Endothelial cell of umbilical vein (primary cell): ENCODE measurements at regions of chr6 and their contacts with region 1.

Region 1: GRCh38 chr6:111605100-111605751 is 452 bp downstream of the TRAF3IP2 start:
- DNase-seq: peak; percentile 77
- H3K4me3 ChIP-seq: peak overlapping the region; percentile 37 to 44 (median 38)
- H3K27ac ChIP-seq: peak overlapping the region; percentile 92
- H3K4me1 ChIP-seq: peaks cover 59% of the 10 kb centered on the region
- H3K27me3 ChIP-seq: no peaks in the 10 kb centered on the region
- CTCF ChIP-seq: no peak
- POLR2A ChIP-seq: no peak

Region 2: DNA sequence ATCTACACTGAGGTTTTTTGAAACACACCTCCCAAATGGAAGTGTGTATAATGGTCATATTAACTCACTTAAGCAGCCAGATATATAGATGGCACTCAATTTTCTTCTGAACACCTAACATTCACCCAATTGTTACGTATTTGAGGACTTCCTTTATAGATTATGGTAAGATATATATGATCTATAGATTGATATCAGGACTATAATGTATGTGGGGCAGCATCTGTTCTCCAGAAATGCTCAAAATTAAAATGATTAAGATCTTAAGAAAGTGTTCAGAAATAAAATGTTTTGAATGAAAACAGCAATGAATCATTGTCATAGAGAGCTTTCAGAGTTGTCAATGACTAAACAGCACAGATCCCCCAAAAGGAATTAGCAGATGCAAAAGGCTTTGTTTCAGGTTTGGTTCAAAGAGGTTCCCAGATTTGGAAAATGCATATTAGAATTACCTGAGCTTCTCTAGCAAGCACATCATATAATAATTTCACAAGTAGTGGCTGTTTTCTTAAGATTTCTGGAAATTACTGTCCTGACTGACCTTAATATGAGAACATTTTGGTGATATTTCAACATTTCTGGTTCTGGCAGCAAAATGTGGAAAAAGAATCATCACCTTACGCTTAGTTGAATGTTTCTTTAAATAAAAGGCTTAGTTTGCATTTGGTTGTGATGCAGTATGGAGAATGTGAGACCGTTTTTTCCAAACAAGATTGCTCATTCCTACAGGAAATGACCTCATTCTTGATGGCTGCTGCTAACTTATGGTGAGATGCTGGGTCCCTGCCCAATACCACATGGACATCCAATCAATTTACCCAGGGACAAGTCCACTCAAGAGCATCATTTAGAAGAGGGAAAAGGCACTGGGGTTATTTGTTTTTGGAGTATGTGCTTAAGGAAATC is 31.1 kb before region 1 on chr6:
- CTCF ChIA-PET with region 1: interaction called, 3 read pairs
- POLR2A ChIA-PET with region 1: no interaction called
- dilution Hi-C with region 1: no loop called
- intact Hi-C with region 1: loop called (anchors 2 kb)
- DNase-seq: peak; percentile 87
- H3K4me3 ChIP-seq: no peak overlapping the region
- H3K27ac ChIP-seq: peak overlapping the region; percentile 69
- H3K4me1 ChIP-seq: peaks cover 21% of the 10 kb centered on the region
- H3K27me3 ChIP-seq: no peaks in the 10 kb centered on the region
- CTCF ChIP-seq: no peak
- POLR2A ChIP-seq: no peak

Region 3: DNA sequence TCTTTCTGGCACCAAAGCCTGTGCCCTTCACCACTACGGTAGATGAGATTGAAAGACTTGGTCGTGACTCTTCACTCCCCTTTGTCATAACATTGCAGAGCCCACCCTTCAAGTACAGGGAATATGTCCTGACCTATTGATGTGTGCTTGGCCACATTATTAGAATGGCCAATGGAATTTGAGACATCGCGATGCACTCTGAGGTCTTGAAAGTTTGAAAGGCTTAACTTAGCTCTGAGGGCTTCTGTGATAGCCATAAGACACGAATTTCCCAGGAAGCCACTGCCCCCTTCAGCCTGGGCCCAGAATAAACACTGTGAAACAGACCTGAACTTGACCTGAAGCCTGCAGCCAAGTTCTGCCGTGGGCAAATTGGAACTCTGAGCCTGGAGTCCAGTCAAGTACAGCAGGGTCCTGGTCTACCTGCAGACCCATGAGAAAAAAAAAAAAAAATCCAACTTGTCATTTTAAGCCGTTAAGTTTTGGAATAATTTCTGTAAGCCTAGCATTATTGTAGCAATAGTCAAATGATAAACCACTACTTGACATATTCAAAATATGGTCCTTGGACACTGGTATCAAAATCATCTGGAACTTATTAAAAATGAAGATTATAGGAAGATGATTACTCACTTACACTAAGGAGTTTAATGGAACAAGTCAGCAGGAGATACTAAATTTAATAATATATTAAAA is 37.4 kb after region 1 on chr6:
- CTCF ChIA-PET with region 1: interaction called, 4 read pairs
- POLR2A ChIA-PET with region 1: no interaction called
- dilution Hi-C with region 1: no loop called
- intact Hi-C with region 1: loop called (anchors 1 kb)
- DNase-seq: peak; percentile 79
- H3K4me3 ChIP-seq: no peak overlapping the region
- H3K27ac ChIP-seq: no peak overlapping the region
- H3K4me1 ChIP-seq: no peaks in the 10 kb centered on the region
- H3K27me3 ChIP-seq: no peaks in the 10 kb centered on the region
- CTCF ChIP-seq: peak; percentile 63 to 67
- POLR2A ChIP-seq: no peak

Region 4: DNA sequence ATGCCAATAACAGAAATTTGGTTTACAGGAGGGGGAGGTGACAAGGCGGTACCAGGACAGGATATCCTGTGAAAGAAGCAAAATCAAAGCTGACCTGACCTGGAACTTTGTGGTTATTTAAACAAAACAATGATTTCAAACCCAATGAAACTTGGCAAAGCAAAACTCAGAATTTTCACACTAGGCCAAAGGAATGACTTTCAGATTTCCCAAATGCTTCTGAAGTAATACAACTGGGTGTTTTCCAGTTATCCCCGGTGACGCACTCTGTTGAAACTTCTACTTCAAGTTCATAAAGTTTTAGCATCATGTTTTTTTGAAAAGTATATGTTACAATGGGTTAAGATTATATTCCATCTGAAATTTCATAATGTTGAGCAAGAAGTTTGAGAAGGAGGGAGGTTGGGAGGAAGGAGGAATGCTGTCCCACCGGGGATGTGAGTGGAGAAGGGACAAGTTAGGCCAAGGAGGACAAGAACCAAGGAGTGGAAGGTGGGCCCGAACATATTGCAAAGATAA is 78.6 kb after region 1 on chr6:
- CTCF ChIA-PET with region 1: interaction called, 4 read pairs
- POLR2A ChIA-PET with region 1: no interaction called
- dilution Hi-C with region 1: no loop called
- intact Hi-C with region 1: loop called (anchors 1 kb)
- DNase-seq: peak; percentile 91
- H3K4me3 ChIP-seq: peak overlapping the region in 1 of 3 experiments; percentile 1
- H3K27ac ChIP-seq: peak overlapping the region; percentile 82
- H3K4me1 ChIP-seq: peaks cover 51% of the 10 kb centered on the region
- H3K27me3 ChIP-seq: no peaks in the 10 kb centered on the region
- CTCF ChIP-seq: no peak
- POLR2A ChIP-seq: no peak

Region 5: GRCh38 chr6:111700135-111700690 is 95.0 kb after region 1 on chr6:
- CTCF ChIA-PET with region 1: no interaction called
- POLR2A ChIA-PET with region 1: no interaction called
- dilution Hi-C with region 1: no loop called
- intact Hi-C with region 1: no loop called
- DNase-seq: no peak
- H3K4me3 ChIP-seq: no peak overlapping the region
- H3K27ac ChIP-seq: no peak overlapping the region
- H3K4me1 ChIP-seq: peaks cover 3% of the 10 kb centered on the region
- H3K27me3 ChIP-seq: no peaks in the 10 kb centered on the region
- CTCF ChIP-seq: no peak
- POLR2A ChIP-seq: no peak

Region 6: DNA sequence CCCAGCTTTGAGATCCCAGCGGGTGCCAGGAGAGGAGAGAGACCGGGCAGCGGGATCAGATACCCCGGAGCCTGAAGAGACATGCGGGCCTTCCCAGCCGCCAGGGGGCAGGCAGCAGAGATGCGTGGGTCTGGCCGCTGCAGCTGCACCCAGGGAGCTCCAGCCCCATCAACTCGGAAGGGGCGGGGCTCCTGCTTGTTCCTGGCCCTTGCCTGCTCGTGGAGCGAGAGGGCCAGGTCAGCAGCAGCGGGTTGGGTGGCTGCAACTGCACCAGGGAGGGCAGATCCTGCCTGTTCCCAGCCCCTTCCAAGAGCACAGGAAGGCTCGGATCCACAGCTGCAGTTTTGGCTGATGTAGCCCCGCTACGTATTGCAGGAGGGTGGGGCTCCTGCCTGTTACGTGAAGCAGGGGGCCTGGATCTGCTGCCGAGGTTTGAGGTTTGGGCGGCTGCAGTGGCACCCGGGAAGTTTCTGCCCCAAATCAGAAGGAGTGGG is 1274.7 kb after region 1 on chr6:
- CTCF ChIA-PET with region 1: no interaction called
- POLR2A ChIA-PET with region 1: no interaction called
- dilution Hi-C with region 1: no loop called
- intact Hi-C with region 1: no loop called
- DNase-seq: no peak
- H3K4me3 ChIP-seq: no peak overlapping the region
- H3K27ac ChIP-seq: no peak overlapping the region
- H3K4me1 ChIP-seq: peaks cover 23% of the 10 kb centered on the region
- H3K27me3 ChIP-seq: no peaks in the 10 kb centered on the region
- CTCF ChIP-seq: no peak
- POLR2A ChIP-seq: no peak